ENCODE measurements at regions of chr1 and their contacts with region 1.

Region 1: GRCh38 chr1:58968360-58968952 is 184.6 kb upstream of the JUN start:
- DNase-seq: peak; percentile 86
- ATAC-seq: peak; percentile 90
- H3K4me3 ChIP-seq: peak overlapping the region in 3 of 5 experiments; percentile 29 to 59 (median 31)
- H3K4me3 Mint-ChIP-seq: peak overlapping the region; percentile 85
- H3K27ac ChIP-seq: peak overlapping the region; percentile 81 to 90
- H3K27ac Mint-ChIP-seq: peak overlapping the region; percentile 100
- H3K4me1 ChIP-seq: peaks cover 54 to 58% of the 10 kb centered on the region in 2 donors
- H3K4me1 Mint-ChIP-seq: peaks cover 70% of the 10 kb centered on the region
- H3K27me3 ChIP-seq: no peaks in the 10 kb centered on the region
- H3K27me3 Mint-ChIP-seq: no peaks in the 10 kb centered on the region
- CTCF ChIP-seq: no peak

Region 2: DNA sequence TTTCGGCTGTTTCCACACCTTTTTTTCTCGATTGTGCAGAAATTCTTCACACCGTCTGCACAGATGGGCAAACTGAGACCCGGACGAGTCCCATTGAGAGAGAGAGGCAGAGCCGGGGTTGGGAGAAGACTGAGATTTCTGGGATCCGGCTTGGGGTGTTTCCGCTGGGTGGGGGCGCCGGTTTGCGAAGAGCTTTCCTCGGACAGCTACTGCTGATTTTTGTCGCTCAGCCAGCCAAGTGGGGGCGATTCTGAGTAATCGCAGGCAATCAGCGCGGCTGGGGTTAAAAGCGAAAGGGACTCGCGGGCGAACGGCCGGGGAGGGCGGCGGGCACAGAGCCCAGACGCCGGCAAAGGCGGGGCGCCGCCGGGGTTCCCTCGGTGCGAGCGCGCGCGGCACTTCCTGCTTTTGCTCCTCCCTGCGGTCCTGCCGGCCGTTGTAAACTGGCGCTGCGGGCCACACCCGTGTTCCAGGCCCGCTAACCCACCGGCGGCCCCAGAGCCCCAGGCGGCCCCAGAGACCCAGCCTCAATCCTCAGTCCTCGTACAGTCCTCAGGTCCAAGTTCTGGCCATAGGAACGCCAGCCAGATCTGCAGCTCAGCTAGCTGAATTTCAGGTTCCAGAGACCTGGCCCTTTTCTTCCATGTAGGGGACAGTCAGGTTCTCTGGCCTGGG is 152.2 kb before region 1 on chr1:
- CTCF ChIA-PET with region 1: no interaction called
- POLR2A ChIA-PET with region 1: interaction called, 3 read pairs
- intact Hi-C with region 1: loop called (anchors 1 kb)
- DNase-seq: peak; percentile 88
- ATAC-seq: peak; percentile 88
- H3K4me3 ChIP-seq: peak overlapping the region; percentile 84 to 98 (median 88)
- H3K4me3 Mint-ChIP-seq: peak overlapping the region; percentile 95
- H3K27ac ChIP-seq: peak overlapping the region; percentile 88 to 91
- H3K27ac Mint-ChIP-seq: peak overlapping the region; percentile 96
- H3K4me1 ChIP-seq: peaks cover 29 to 45% of the 10 kb centered on the region in 2 donors
- H3K4me1 Mint-ChIP-seq: peaks cover 51% of the 10 kb centered on the region
- H3K27me3 ChIP-seq: no peaks in the 10 kb centered on the region
- H3K27me3 Mint-ChIP-seq: no peaks in the 10 kb centered on the region
- CTCF ChIP-seq: no peak

Region 3: DNA sequence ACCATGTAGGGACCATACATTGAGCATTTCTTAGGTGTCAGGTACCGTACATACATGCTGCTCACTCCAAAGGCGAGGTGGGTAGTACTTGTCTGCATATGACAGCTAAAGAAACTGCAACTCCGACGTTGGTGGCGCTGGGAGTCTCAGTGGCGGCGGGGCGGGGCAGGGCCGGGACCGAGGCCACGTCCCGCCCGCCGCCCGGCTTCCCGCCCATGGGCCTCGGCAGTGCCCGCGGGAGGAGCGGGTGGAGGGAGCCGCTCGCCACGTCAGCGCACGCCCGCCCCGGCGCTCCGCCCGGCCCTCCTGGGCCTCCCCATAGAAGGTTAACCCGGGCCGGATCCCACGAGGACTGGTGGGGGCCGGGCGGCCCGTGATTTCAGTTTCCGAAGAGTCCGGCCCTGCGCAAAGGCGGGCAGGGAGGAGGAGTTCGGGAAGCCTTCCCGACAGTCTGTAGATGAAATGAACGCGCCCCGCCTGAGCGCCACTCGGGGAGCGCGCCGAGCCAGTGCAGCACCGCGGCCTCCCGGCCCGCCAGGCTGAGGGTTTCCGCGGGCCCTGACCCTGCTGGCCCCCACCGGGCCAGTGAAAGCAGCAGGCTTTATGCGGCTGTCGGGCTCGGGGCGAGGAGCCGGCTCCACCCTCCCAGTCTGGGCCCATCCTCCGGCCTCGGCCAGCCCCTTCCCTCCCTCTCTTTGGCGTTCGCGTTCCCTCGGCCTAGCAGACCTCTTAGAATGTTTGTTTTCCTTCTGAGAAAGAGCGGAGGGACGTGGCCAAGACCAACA is 64.8 kb before region 1 on chr1:
- CTCF ChIA-PET with region 1: interaction called, 8 read pairs
- POLR2A ChIA-PET with region 1: interaction called, 3 read pairs
- intact Hi-C with region 1: loop called (anchors 2 kb)
- DNase-seq: peak; percentile 77
- ATAC-seq: peak; percentile 88
- H3K4me3 ChIP-seq: peak overlapping the region; percentile 45 to 74 (median 60)
- H3K4me3 Mint-ChIP-seq: peak overlapping the region; percentile 85
- H3K27ac ChIP-seq: peak overlapping the region; percentile 49 to 82
- H3K27ac Mint-ChIP-seq: peak overlapping the region; percentile 86
- H3K4me1 ChIP-seq: peaks cover 10% of the 10 kb centered on the region in 2 donors
- H3K4me1 Mint-ChIP-seq: peaks cover 13% of the 10 kb centered on the region
- H3K27me3 ChIP-seq: no peaks in the 10 kb centered on the region
- H3K27me3 Mint-ChIP-seq: no peaks in the 10 kb centered on the region
- CTCF ChIP-seq: no peak

Region 4: DNA sequence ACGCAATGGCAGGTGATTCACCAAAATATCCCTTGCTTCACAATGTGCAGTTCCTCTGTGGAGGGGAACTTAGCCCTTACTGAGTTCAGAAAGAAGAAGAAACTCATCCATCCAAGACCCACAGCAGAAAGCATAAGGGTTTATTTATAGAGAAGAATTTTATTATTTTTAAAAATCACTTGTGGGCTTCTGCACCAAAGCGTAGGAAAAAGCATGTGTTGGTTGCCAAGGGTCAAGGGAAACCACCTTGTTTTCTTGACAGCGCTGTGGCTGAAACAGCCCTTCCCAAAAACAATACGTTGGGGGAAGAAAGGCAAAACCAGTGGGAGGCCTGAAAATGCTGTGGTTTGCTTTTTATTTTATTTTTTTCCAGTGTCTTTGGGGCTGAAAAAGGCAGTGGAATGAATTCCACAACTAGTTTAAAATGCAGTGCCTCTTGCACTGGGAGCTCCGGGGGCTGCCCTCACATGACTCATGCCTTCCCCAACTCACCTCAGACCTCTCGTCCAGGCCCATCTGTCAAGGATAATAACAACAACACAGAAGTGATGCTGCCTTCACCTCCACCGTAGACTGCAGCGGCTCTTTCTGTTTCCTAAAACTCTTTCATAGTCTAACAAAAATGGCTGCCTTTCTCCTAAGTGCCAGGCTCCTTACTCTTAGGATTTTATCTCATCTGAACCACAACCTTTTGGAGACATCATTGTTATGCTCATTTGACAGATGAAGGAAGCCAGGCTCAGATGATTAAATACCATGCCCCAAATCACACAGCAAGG is 39.6 kb after region 1 on chr1:
- CTCF ChIA-PET with region 1: interaction called, 4 read pairs
- POLR2A ChIA-PET with region 1: no interaction called
- intact Hi-C with region 1: loop called (anchors 1 kb)
- DNase-seq: peak; percentile 57
- ATAC-seq: peak; percentile 68
- H3K4me3 ChIP-seq: peak overlapping the region in 3 of 5 experiments; percentile 0 to 44 (median 6)
- H3K4me3 Mint-ChIP-seq: peak overlapping the region; percentile 55
- H3K27ac ChIP-seq: peak overlapping the region; percentile 70 to 85
- H3K27ac Mint-ChIP-seq: peak overlapping the region; percentile 90
- H3K4me1 ChIP-seq: peaks cover 62 to 70% of the 10 kb centered on the region in 2 donors
- H3K4me1 Mint-ChIP-seq: peaks cover 80% of the 10 kb centered on the region
- H3K27me3 ChIP-seq: no peaks in the 10 kb centered on the region
- H3K27me3 Mint-ChIP-seq: no peaks in the 10 kb centered on the region
- CTCF ChIP-seq: no peak

Region 5: DNA sequence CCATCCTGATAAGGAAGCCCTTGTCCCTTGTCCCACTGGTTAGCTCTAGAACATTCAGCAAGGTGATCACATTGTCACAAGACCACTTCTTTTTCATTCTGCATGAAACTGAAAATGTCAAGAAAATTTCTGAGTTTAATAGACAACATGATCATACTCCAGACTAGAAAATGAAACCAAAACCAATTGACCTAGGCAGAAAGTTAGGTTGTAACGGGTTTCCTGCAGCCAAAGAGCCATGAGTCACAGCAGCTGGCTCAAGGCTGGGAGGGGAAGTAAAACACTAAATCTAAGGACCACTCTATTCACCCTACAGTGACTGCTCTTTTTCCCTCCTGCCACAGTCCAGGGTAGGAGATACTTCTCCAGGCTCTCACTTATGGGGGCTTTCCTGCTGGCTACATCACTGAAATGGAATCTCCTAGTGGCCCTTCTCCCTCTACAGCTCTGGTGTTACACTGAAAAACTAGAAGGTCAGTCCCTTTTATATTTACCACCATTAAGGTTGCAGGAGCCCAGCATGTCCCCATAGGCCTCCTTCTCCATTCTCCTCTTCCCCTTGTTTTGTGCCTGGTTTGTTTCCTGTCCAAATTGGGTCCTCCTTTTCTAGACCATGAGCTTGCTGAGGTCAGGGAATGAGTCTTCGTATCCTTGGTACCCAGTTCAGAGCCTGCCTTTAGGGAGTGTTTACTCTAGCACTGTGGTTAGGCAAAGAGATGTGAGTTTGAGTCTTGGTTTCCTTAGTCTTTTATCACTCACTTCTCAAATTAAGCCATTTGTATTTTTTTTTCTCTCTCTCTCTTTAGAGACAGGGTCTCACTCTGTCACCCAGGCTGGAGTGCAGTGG is 51.9 kb after region 1 on chr1:
- CTCF ChIA-PET with region 1: interaction called, 3 read pairs
- POLR2A ChIA-PET with region 1: interaction called, 7 read pairs
- intact Hi-C with region 1: loop called (anchors 1 kb)
- DNase-seq: peak; percentile 83
- ATAC-seq: peak; percentile 94
- H3K4me3 ChIP-seq: peak overlapping the region in 3 of 5 experiments; percentile 18 to 41 (median 33)
- H3K4me3 Mint-ChIP-seq: peak overlapping the region; percentile 76
- H3K27ac ChIP-seq: peak overlapping the region; percentile 81 to 82
- H3K27ac Mint-ChIP-seq: peak overlapping the region; percentile 96
- H3K4me1 ChIP-seq: peaks cover 22 to 38% of the 10 kb centered on the region in 2 donors
- H3K4me1 Mint-ChIP-seq: peaks cover 48% of the 10 kb centered on the region
- H3K27me3 ChIP-seq: no peaks in the 10 kb centered on the region
- H3K27me3 Mint-ChIP-seq: no peaks in the 10 kb centered on the region
- CTCF ChIP-seq: no peak

Region 6: DNA sequence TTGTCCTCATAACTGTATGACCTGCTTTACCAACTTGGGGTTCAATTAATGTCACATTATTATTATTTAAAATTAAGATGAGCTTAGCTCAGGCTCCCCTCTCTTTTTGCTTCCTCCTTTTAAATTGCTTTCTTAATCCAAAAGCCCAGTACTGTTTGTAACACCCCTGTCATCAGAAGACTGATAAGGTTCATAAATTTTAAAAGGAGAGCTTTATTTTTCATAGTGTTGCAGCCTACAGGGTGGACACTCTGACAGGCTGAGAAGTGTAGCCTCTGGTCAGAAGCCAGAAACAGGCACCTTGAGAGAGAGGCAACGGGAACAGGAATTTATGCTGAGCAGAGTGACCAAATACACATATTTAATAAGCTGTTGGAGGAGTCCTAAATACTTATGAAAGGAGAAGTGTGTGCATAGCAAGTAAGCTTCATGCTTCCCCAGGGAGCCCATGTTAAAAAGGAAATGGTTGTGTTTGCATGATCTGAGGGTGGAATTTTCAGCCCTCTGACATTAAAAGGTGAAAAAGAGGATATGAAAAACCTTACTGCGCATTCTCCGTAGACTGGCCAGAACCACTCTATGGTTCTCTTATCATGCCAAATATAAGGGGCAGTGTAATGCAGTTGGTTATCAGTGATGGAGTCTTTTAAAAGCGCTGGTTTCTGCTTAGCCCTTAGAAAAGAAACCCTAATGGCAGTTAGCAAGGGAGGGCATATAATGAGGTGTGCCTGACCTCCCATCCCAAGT is 297.9 kb after region 1 on chr1:
- CTCF ChIA-PET with region 1: no interaction called
- POLR2A ChIA-PET with region 1: no interaction called
- intact Hi-C with region 1: loop called (anchors 1 kb)
- DNase-seq: peak; percentile 85
- ATAC-seq: peak; percentile 96
- H3K4me3 ChIP-seq: peak overlapping the region in 1 of 5 experiments; percentile 24
- H3K4me3 Mint-ChIP-seq: peak overlapping the region; percentile 35
- H3K27ac ChIP-seq: peak overlapping the region; percentile 48 to 76
- H3K27ac Mint-ChIP-seq: peak overlapping the region; percentile 95
- H3K4me1 ChIP-seq: peaks cover 22 to 34% of the 10 kb centered on the region in 2 donors
- H3K4me1 Mint-ChIP-seq: peaks cover 39% of the 10 kb centered on the region
- H3K27me3 ChIP-seq: no peaks in the 10 kb centered on the region
- H3K27me3 Mint-ChIP-seq: no peaks in the 10 kb centered on the region
- CTCF ChIP-seq: no peak